ENCODE measurements at regions of chr4 and their contacts with region 1.

Region 1: GRCh38 chr4:143728166-143728565 is 27.7 kb upstream of the FREM3 start:
- DNase-seq: no peak
- ATAC-seq: no peak
- H3K4me3 ChIP-seq: no peak overlapping the region
- H3K27ac ChIP-seq: no peak overlapping the region
- H3K4me1 ChIP-seq: no peaks in the 10 kb centered on the region
- H3K27me3 ChIP-seq: no peaks in the 10 kb centered on the region
- CTCF ChIP-seq: no peak
- EP300 ChIP-seq: no peak
- POLR2A ChIP-seq: no peak
- RAD21 ChIP-seq: no peak

Region 2: DNA sequence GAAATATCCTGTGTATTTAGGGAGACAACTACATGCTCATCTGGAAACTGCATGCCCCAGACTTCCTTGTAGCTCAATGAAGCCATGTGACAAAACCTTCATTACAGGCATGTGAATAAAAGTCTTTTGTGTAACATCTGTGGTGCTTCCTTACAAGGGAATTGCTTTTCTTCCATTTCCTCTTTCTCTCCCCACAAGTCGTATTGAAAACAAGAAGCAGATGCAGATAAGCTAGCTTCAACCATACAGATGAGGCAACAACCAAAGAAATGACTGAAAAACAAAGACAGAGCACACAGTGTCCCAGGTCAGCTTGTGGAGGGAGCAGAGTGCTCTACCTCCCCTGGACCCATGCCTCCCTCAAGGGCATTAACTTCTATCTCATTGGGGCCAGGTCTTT is 766.3 kb before region 1 on chr4:
- CTCF ChIA-PET with region 1: no interaction called
- POLR2A ChIA-PET with region 1: no interaction called
- in situ Hi-C with region 1: loop called (anchors 10 kb)
- intact Hi-C with region 1: no loop called
- DNase-seq: no peak
- ATAC-seq: no peak
- H3K4me3 ChIP-seq: no peak overlapping the region
- H3K27ac ChIP-seq: no peak overlapping the region
- H3K4me1 ChIP-seq: no peaks in the 10 kb centered on the region
- H3K27me3 ChIP-seq: no peaks in the 10 kb centered on the region
- CTCF ChIP-seq: no peak
- EP300 ChIP-seq: no peak
- POLR2A ChIP-seq: no peak
- RAD21 ChIP-seq: no peak

Measured in K562 (cell line).